ENCODE measurements at regions of chr10 and their contacts with region 1.

Region 1: DNA sequence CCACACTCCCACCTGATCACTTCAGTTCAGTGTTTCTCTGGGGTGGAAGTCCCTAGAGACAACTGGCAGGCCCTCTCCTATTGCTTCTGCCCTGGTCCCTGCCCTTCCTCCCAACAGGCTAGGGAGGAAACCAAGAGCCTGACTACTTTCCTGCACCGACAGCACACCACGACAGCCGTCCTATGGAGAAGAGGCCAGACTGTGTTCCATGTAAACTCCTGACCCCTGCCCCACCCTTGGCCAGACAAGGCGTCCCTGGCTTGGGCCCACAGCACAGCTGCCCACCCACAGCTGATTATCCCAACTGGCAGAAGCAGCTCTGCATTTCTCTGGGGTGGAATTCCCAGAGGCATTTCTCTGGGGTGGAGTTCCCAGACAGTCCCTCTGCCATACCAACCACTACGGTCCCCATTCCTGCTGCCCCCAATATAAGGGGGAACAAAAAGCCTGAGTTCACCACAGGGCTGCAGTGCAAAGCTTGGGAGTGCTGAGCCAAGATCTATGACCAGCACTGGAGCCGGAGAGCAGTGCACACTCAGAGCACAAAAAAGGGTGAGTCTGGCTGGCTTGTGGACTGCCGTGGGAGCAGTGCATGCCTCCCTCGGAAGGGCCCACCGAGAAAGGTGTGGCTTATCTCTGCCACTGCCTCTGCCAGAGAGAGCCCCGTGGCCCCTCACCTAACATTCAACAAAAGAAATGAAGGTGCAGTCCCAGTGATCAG is 193.4 kb downstream of the HPSE2 start:
- DNase-seq: no peak
- H3K4me3 Mint-ChIP-seq: no peak overlapping the region
- H3K27ac Mint-ChIP-seq: no peak overlapping the region
- H3K4me1 Mint-ChIP-seq: no peaks in the 10 kb centered on the region
- H3K27me3 Mint-ChIP-seq: no peaks in the 10 kb centered on the region

Region 2: DNA sequence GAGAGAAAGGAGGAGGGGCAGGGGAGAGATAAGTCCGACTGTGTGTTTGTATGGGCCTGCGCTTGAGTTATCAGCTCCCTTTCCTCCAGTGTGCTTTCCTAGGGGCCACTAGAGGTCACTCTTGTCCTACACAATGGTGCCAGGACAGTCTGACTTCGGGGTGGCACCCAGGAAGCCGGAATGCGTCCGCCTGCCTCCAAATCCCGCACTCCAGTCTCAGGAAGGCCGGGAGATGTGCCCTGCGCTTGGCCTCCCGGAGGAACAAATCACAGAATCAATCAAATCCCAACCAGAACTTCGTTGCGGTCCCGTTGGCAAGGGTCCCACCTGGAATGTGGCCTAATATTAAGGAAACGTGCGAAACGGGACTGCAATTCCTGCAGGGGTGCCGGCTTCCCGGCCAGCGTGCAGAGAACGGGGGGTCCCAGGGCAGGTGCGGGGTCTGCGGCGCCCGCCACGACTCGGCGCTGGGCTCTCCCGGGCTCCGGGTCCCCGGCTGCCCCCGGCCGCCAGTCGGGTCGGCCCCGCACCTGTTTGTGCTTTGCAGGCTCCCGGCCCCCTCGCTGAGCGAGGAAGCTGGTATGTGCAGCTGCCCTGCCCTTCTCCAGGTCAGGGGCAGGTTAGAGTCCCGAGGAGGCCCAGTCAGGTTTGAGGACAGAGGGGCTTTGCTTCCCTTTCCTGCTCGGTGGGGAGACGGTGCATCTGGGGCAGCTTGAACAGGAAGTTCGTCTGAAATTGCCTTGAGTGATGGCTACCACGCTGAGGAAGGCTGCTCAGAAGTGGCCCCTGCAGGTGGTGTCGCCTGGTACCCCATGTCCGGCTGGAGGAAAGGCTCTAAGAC is 574.5 kb before region 1 on chr10:
- CTCF ChIA-PET with region 1: interaction called, 7 read pairs
- intact Hi-C with region 1: loop called (anchors 1 kb)
- DNase-seq: peak; percentile 75
- H3K4me3 Mint-ChIP-seq: peak overlapping the region; percentile 79
- H3K27ac Mint-ChIP-seq: peak overlapping the region; percentile 57
- H3K4me1 Mint-ChIP-seq: peaks cover 6% of the 10 kb centered on the region
- H3K27me3 Mint-ChIP-seq: peaks cover 9% of the 10 kb centered on the region

Region 3: GRCh38 chr10:98748298-98748697 is 293.9 kb before region 1 on chr10:
- CTCF ChIA-PET with region 1: no interaction called
- intact Hi-C with region 1: loop called (anchors 10 kb)
- DNase-seq: peak; percentile 10
- H3K4me3 Mint-ChIP-seq: no peak overlapping the region
- H3K27ac Mint-ChIP-seq: no peak overlapping the region
- H3K4me1 Mint-ChIP-seq: no peaks in the 10 kb centered on the region
- H3K27me3 Mint-ChIP-seq: peaks cover 3% of the 10 kb centered on the region

Region 4: GRCh38 chr10:99497343-99498025 is 455.3 kb after region 1 on chr10:
- CTCF ChIA-PET with region 1: no interaction called
- intact Hi-C with region 1: no loop called
- DNase-seq: no peak
- H3K4me3 Mint-ChIP-seq: no peak overlapping the region
- H3K27ac Mint-ChIP-seq: no peak overlapping the region
- H3K4me1 Mint-ChIP-seq: no peaks in the 10 kb centered on the region
- H3K27me3 Mint-ChIP-seq: peaks cover 17% of the 10 kb centered on the region

Measured in activated naive CD4-positive, alpha-beta T cell treated with anti-CD3 and anti-CD28 coated beads for 36 hours (primary cell).